Activated CD4-positive, alpha-beta T cell treated with anti-CD3 and anti-CD28 coated beads for 36 hours (primary cell): ENCODE measurements at regions of chr20 and their contacts with region 1.

Region 1: GRCh38 chr20:46089417-46090388 is at the start of gene NCOA5:
- DNase-seq: peak; percentile 97
- ATAC-seq: peak; percentile 87
- H3K4me3 Mint-ChIP-seq: peak within 1 kb of the TSS; percentile 86
- H3K27ac Mint-ChIP-seq: peak within 1 kb of the TSS; percentile 88
- H3K4me1 Mint-ChIP-seq: peaks cover 46% of the 10 kb centered on the region
- H3K27me3 Mint-ChIP-seq: no peaks in the 10 kb centered on the region
- total RNA-seq, gene NCOA5: 17.9 to 18.8 TPM

Region 2: GRCh38 chr20:45792332-45792686 is 297.4 kb before region 1 on chr20:
- CTCF ChIA-PET with region 1: no interaction called
- POLR2A ChIA-PET with region 1: no interaction called
- intact Hi-C with region 1: loop called in 1 of 2 experiments (anchors 1 kb)
- DNase-seq: peak; percentile 12
- ATAC-seq: peak; percentile 2
- H3K4me3 Mint-ChIP-seq: peak overlapping the region; percentile 81
- H3K27ac Mint-ChIP-seq: peak overlapping the region; percentile 80
- H3K4me1 Mint-ChIP-seq: peaks cover 13% of the 10 kb centered on the region
- H3K27me3 Mint-ChIP-seq: no peaks in the 10 kb centered on the region

Region 3: DNA sequence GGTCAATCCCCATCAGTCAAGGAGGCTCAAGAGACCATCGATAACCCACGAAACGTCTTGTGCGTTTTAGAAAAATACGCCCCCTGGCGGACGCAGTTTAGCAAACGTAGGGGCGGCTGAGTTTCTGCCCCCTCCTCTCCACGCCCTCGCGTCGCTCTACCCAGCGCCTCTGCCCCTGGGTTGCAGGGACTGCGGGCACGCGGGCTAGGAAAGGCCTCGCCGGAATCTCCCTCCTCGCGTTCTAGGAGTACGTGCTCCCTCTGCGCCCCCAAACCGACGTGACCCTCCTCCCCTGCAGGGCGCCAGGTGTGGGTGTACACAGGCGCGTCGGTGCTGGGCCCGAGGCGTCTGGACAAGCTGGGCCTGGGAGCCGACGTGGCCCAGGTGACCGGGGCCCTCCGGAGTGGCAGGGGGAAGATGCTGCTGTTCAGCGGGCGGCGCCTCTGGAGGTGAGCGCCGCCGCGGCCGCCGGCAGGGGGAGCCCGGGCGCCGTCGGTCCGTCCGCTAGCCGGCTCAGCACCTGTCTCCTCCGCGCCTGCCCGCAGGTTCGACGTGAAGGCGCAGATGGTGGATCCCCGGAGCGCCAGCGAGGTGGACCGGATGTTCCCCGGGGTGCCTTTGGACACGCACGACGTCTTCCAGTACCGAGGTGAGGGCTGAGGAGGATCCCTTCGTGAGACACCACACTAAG is 75.7 kb before region 1 on chr20:
- CTCF ChIA-PET with region 1: interaction called, 11 read pairs
- POLR2A ChIA-PET with region 1: no interaction called
- intact Hi-C with region 1: loop called in 1 of 2 experiments (anchors 1 kb)
- DNase-seq: peak; percentile 85
- ATAC-seq: peak; percentile 88
- H3K4me3 Mint-ChIP-seq: peak overlapping the region; percentile 39
- H3K27ac Mint-ChIP-seq: no peak overlapping the region
- H3K4me1 Mint-ChIP-seq: peaks cover 51% of the 10 kb centered on the region
- H3K27me3 Mint-ChIP-seq: peaks cover 58% of the 10 kb centered on the region

Region 4: DNA sequence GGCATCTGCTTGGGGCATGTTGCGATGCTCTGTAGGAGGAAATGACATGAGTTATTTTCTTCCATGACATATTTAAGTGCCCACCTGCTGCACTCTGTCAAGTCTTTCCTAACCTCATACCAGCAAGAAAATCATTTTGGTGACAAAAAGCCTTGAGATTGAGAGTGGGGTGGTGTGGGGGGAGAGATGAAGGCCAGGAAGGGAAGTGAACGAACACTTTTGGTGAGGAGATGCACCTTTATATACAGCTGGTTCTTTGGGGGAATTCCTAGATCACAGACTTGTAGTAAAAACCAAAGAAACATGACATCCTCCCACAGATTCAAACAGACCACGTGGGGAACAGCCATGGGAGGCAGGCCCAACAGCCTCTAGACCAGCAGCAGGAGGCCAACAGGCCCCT is 26.1 kb before region 1 on chr20:
- CTCF ChIA-PET with region 1: no interaction called
- POLR2A ChIA-PET with region 1: no interaction called
- intact Hi-C with region 1: loop called in 1 of 2 experiments (anchors 1 kb)
- DNase-seq: peak; percentile 35
- ATAC-seq: peak; percentile 76
- H3K4me3 Mint-ChIP-seq: no peak overlapping the region
- H3K27ac Mint-ChIP-seq: peak overlapping the region; percentile 75
- H3K4me1 Mint-ChIP-seq: peaks cover 58% of the 10 kb centered on the region
- H3K27me3 Mint-ChIP-seq: peaks cover 5% of the 10 kb centered on the region

Region 5: GRCh38 chr20:46406199-46406985 is 316.7 kb after region 1 on chr20 and contains the start of gene ELMO2:
- CTCF ChIA-PET with region 1: no interaction called
- POLR2A ChIA-PET with region 1: no interaction called
- intact Hi-C with region 1: loop called (anchors 1 kb)
- DNase-seq: peak; percentile 98
- ATAC-seq: peak; percentile 85
- H3K4me3 Mint-ChIP-seq: peak within 1 kb of the TSS; percentile 88
- H3K27ac Mint-ChIP-seq: peak within 1 kb of the TSS; percentile 85
- H3K4me1 Mint-ChIP-seq: peaks cover 65% of the 10 kb centered on the region
- H3K27me3 Mint-ChIP-seq: no peaks in the 10 kb centered on the region
- total RNA-seq, gene ELMO2: 47.4 to 54.6 TPM